CD8-positive, alpha-beta memory T cell (primary cell): ENCODE measurements at regions of chr6 and their contacts with region 1.

Region 1: GRCh38 chr6:83057705-83058321 is 7.8 kb downstream of the UBE3D start:
- DNase-seq: no peak
- H3K4me3 ChIP-seq: no peak overlapping the region
- H3K4me3 Mint-ChIP-seq: peak overlapping the region in 1 of 7 donors; percentile 25
- H3K27ac ChIP-seq: no peak overlapping the region
- H3K27ac Mint-ChIP-seq: no peak overlapping the region
- H3K4me1 ChIP-seq: no peaks in the 10 kb centered on the region
- H3K4me1 Mint-ChIP-seq: peaks cover 4 to 16% (median 12%) of the 10 kb centered on the region in 3 donors
- H3K27me3 ChIP-seq: no peaks in the 10 kb centered on the region
- H3K27me3 Mint-ChIP-seq: no peaks in the 10 kb centered on the region

Region 2: GRCh38 chr6:82270881-82271645 is 786.8 kb before region 1 on chr6:
- CTCF ChIA-PET with region 1: interaction called, 10 read pairs
- POLR2A ChIA-PET with region 1: no interaction called
- DNase-seq: peak in 1 of 5 donors; percentile 24
- H3K4me3 ChIP-seq: no peak overlapping the region
- H3K4me3 Mint-ChIP-seq: no peak overlapping the region
- H3K27ac ChIP-seq: no peak overlapping the region
- H3K27ac Mint-ChIP-seq: no peak overlapping the region
- H3K4me1 ChIP-seq: no peaks in the 10 kb centered on the region
- H3K4me1 Mint-ChIP-seq: peaks cover 0 to 2% (median 0%) of the 10 kb centered on the region in 3 donors
- H3K27me3 ChIP-seq: no peaks in the 10 kb centered on the region
- H3K27me3 Mint-ChIP-seq: peaks cover 4% of the 10 kb centered on the region in 2 donors